PC-9 (cell line): ENCODE measurements at regions of chr9 and their contacts with region 1.

Region 1: DNA sequence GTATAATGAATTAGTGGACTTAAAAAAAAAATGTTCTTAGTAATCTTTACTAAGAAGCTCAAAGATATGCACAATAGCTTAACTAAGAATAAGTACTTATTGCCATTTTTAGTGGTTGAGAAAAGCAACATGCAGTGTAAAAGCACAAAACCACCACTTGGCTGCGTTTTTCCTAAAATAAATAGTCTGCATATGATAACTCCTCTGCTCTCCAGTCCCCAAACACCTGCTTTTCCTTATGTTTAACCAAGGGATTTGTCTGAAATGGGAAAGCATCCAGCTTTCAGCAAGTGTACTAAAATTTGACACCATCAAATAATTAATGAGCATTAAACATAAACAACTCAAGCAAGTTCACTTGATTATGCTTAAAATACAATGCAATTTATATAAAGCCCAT is 41.4 kb downstream of the PSIP1 start:
- DNase-seq: no peak
- H3K4me3 ChIP-seq: no peak overlapping the region
- H3K27ac ChIP-seq: no peak overlapping the region
- H3K4me1 ChIP-seq: no peaks in the 10 kb centered on the region
- H3K27me3 ChIP-seq: no peaks in the 10 kb centered on the region
- CTCF ChIP-seq: no peak

Region 2: DNA sequence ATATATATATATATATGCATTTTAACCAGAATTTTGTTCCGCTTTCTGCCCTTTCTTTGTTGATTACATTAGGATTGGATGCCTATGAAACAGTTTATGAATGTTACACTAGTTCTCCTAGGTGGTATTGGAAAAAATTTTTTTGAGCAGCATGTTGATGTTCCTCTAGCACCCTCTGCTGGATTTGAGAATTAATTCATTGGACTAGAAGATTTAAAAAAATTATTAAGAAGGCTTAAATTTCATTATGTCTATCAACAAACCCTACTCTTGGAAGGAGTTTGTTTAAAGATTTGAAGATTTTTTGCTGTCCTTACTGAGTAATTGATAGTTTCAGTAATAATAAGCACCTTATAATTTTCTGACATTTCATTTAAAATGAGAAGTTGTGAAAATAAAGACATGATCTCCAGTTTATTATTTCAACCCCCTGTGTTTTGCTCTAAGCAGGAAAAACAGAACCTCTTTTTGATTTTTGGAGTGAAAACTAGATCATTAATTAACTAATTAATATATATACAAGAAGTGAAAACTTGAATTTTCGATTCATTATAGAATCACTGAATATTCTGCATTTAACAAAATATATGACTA is 173.1 kb after region 1 on chr9:
- CTCF ChIA-PET with region 1: interaction called, 11 read pairs
- POLR2A ChIA-PET with region 1: no interaction called
- intact Hi-C with region 1: no loop called
- DNase-seq: no peak
- H3K4me3 ChIP-seq: no peak overlapping the region
- H3K27ac ChIP-seq: no peak overlapping the region
- H3K4me1 ChIP-seq: no peaks in the 10 kb centered on the region
- H3K27me3 ChIP-seq: no peaks in the 10 kb centered on the region
- CTCF ChIP-seq: peak; percentile 67

Region 3: GRCh38 chr9:16475257-16475656 is 1005.9 kb after region 1 on chr9:
- CTCF ChIA-PET with region 1: interaction called, 10 read pairs
- POLR2A ChIA-PET with region 1: no interaction called
- intact Hi-C with region 1: no loop called
- DNase-seq: no peak
- H3K4me3 ChIP-seq: no peak overlapping the region
- H3K27ac ChIP-seq: no peak overlapping the region
- H3K4me1 ChIP-seq: no peaks in the 10 kb centered on the region
- H3K27me3 ChIP-seq: no peaks in the 10 kb centered on the region
- CTCF ChIP-seq: no peak